ENCODE measurements at regions of chr21 and their contacts with region 1.

Region 1: DNA sequence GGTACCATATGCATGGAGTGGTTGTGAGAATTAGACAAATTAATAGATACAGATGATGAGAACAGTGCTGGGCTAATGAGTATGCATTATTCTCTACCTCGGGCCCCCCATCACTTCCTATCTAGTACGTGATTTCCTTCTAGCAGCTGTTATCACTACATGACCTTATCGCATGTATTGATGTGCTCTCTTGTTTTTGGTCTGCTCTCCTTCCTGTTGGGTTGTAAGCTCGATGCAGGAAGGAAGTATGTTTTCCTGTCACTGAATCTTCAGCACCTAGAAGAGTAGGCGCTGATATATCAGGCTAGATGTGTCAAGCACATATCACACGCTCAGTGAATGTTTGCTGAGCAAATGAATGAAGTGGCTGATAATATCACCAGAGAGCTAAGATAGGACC is 43.9 kb upstream of the IFNAR2 start:
- DNase-seq: no peak
- H3K4me3 ChIP-seq: no peak overlapping the region
- H3K4me3 Mint-ChIP-seq: no peak overlapping the region
- H3K27ac ChIP-seq: no peak overlapping the region
- H3K27ac Mint-ChIP-seq: no peak overlapping the region
- H3K4me1 ChIP-seq: peaks cover 10 to 12% of the 10 kb centered on the region in 2 donors
- H3K4me1 Mint-ChIP-seq: peaks cover 21% of the 10 kb centered on the region
- H3K27me3 ChIP-seq: no peaks in the 10 kb centered on the region
- H3K27me3 Mint-ChIP-seq: peaks cover 3 to 10% (median 8%) of the 10 kb centered on the region in 3 donors
- CTCF ChIP-seq: no peak

Region 2: DNA sequence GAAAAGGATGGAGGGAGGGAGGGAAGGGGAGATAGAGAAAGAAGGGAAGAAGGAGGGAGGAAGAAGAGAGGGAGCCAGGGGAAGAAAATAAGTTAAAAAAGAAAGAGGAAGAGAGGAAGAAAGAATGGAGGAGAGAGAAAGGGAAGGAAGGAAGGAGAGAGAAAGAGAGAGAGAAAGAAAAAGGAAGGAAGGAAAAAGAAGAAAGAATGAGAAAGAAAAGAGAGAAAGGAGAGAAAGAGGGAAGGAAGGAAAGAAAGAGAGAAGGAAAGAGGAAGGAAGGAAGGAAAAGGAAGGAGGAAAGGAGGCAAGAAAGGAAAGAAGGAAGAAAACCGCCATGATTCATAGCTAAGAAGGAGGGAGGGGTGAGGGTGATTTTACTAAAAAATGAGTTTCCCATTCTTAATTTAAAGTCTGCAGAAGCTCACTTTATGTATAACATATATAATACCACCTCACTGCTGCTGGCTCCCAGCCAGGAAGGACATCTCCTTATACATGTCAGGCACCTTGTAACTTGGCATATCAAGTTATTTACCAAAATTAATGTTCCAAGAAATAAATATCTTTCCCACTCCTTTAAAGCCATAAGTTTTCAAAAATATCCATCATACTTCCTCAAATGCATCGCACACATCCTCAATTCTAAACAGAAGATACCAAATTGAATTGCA is 206.1 kb before region 1 on chr21:
- intact Hi-C with region 1: loop called in 1 of 2 experiments (anchors 10 kb)
- DNase-seq: no peak
- H3K4me3 ChIP-seq: no peak overlapping the region
- H3K4me3 Mint-ChIP-seq: no peak overlapping the region
- H3K27ac ChIP-seq: no peak overlapping the region
- H3K27ac Mint-ChIP-seq: peak overlapping the region in 4 of 7 donors; percentile 2 to 73 (median 56)
- H3K4me1 ChIP-seq: peaks cover 0 to 9% of the 10 kb centered on the region in 2 donors
- H3K4me1 Mint-ChIP-seq: peaks cover 19% of the 10 kb centered on the region
- H3K27me3 ChIP-seq: peaks cover 2 to 4% of the 10 kb centered on the region in 2 donors
- H3K27me3 Mint-ChIP-seq: peaks cover 0 to 22% (median 4%) of the 10 kb centered on the region in 3 donors
- CTCF ChIP-seq: no peak

Region 3: GRCh38 chr21:33199516-33200217 is 13.8 kb after region 1 on chr21:
- intact Hi-C with region 1: no loop called
- DNase-seq: peak; percentile 95 to 98 (median 98)
- H3K4me3 ChIP-seq: peak overlapping the region in 1 of 3 experiments; percentile 34
- H3K4me3 Mint-ChIP-seq: peak overlapping the region in 1 of 2 donors; percentile 74
- H3K27ac ChIP-seq: peak overlapping the region; percentile 74 to 91
- H3K27ac Mint-ChIP-seq: peak overlapping the region; percentile 93 to 99 (median 98)
- H3K4me1 ChIP-seq: peaks cover 61 to 73% of the 10 kb centered on the region in 2 donors
- H3K4me1 Mint-ChIP-seq: peaks cover 66% of the 10 kb centered on the region
- H3K27me3 ChIP-seq: no peaks in the 10 kb centered on the region
- H3K27me3 Mint-ChIP-seq: peaks cover 0 to 8% (median 6%) of the 10 kb centered on the region in 3 donors
- CTCF ChIP-seq: peak; percentile 80

Region 4: GRCh38 chr21:33229784-33230544 is 44.1 kb after region 1 on chr21 and contains the start of gene IFNAR2:
- intact Hi-C with region 1: no loop called
- DNase-seq: peak; percentile 58 to 69 (median 64)
- H3K4me3 ChIP-seq: peak within 1 kb of the TSS; percentile 92 to 99 (median 97)
- H3K4me3 Mint-ChIP-seq: peak within 1 kb of the TSS; percentile 90 to 93
- H3K27ac ChIP-seq: peak within 1 kb of the TSS; percentile 88 to 95
- H3K27ac Mint-ChIP-seq: peak within 1 kb of the TSS; percentile 87 to 96 (median 92)
- H3K4me1 ChIP-seq: peaks cover 43 to 54% of the 10 kb centered on the region in 2 donors
- H3K4me1 Mint-ChIP-seq: peaks cover 49% of the 10 kb centered on the region
- H3K27me3 ChIP-seq: no peaks in the 10 kb centered on the region
- H3K27me3 Mint-ChIP-seq: peaks cover 0 to 3% (median under 1%) of the 10 kb centered on the region in 3 donors
- CTCF ChIP-seq: no peak
- polyA plus RNA-seq, gene IFNAR2: 47.7 to 79.8 (median 59.5) TPM